Tibial artery (tissue), 4 donors: ENCODE measurements at regions of chr15 and their contacts with region 1.

Region 1: GRCh38 chr15:96330450-96331145 is at the start of gene NR2F2:
- DNase-seq: peak; percentile 98
- H3K4me3 ChIP-seq: peak within 1 kb of the TSS; percentile 92 to 97
- H3K27ac ChIP-seq: peak within 1 kb of the TSS; percentile 97 to 100
- H3K4me1 ChIP-seq: peaks cover 0 to 8% (median 4%) of the 10 kb centered on the region in 4 donors
- H3K27me3 ChIP-seq: no peaks in the 10 kb centered on the region
- CTCF ChIP-seq: no peak

Region 2: GRCh38 chr15:94844538-94845389 is 1485.8 kb before region 1 on chr15:
- intact Hi-C with region 1: loop called (anchors 10 kb)
- DNase-seq: peak; percentile 40 to 71
- H3K4me3 ChIP-seq: peak overlapping the region; percentile 51 to 55
- H3K27ac ChIP-seq: peak overlapping the region; percentile 86 to 89
- H3K4me1 ChIP-seq: peaks cover 0 to 37% (median 26%) of the 10 kb centered on the region in 4 donors
- H3K27me3 ChIP-seq: no peaks in the 10 kb centered on the region
- CTCF ChIP-seq: peak in 1 of 2 experiments; percentile 14

Region 3: GRCh38 chr15:95169541-95170459 is 1160.8 kb before region 1 on chr15:
- intact Hi-C with region 1: loop called (anchors 10 kb)
- DNase-seq: peak; percentile 86 to 91
- H3K4me3 ChIP-seq: peak overlapping the region; percentile 36 to 46
- H3K27ac ChIP-seq: peak overlapping the region; percentile 85 to 86
- H3K4me1 ChIP-seq: peaks cover 0 to 47% (median 17%) of the 10 kb centered on the region in 4 donors
- H3K27me3 ChIP-seq: no peaks in the 10 kb centered on the region
- CTCF ChIP-seq: no peak

Region 4: GRCh38 chr15:95326431-95327182 is 1004.0 kb before region 1 on chr15:
- intact Hi-C with region 1: loop called (anchors 5 kb)
- DNase-seq: peak; percentile 55 to 85
- H3K4me3 ChIP-seq: peak overlapping the region; percentile 61 to 62
- H3K27ac ChIP-seq: peak overlapping the region; percentile 91 to 93
- H3K4me1 ChIP-seq: peaks cover 0 to 49% (median 11%) of the 10 kb centered on the region in 4 donors
- H3K27me3 ChIP-seq: no peaks in the 10 kb centered on the region
- CTCF ChIP-seq: no peak